Right ventricle myocardium superior (tissue), 1 donor: ENCODE measurements at regions of chr1 and their contacts with region 1.

Region 1: GRCh38 chr1:32876341-32877210 is 5.9 kb upstream of the FNDC5 start:
- DNase-seq: peak; percentile 78
- ATAC-seq: peak; percentile 59

Region 2: GRCh38 chr1:32496127-32496526 is 380.4 kb before region 1 on chr1:
- intact Hi-C with region 1: loop called (anchors 10 kb)
- DNase-seq: no peak
- ATAC-seq: peak; percentile 23

Region 3: DNA sequence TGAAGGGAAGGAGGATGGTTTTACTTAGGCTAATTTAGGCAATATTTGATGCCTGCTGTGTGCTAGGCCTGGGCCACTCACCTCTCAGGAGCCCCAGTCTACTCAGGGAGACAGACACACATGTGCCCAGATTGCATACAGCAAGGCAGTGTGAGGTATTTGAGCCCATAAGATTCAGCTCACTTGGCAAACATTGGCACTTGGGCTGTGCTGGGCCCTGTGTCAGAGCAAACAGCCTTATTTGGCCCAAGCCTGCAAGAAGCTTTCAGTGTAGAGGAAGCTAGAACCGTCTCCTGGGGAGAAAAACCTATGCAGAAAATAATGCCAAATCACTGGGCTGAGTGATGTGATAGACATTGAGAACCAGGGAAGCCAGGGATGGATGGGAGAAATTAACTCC is 170.1 kb before region 1 on chr1:
- intact Hi-C with region 1: no loop called
- DNase-seq: peak; percentile 13
- ATAC-seq: no peak

Region 4: DNA sequence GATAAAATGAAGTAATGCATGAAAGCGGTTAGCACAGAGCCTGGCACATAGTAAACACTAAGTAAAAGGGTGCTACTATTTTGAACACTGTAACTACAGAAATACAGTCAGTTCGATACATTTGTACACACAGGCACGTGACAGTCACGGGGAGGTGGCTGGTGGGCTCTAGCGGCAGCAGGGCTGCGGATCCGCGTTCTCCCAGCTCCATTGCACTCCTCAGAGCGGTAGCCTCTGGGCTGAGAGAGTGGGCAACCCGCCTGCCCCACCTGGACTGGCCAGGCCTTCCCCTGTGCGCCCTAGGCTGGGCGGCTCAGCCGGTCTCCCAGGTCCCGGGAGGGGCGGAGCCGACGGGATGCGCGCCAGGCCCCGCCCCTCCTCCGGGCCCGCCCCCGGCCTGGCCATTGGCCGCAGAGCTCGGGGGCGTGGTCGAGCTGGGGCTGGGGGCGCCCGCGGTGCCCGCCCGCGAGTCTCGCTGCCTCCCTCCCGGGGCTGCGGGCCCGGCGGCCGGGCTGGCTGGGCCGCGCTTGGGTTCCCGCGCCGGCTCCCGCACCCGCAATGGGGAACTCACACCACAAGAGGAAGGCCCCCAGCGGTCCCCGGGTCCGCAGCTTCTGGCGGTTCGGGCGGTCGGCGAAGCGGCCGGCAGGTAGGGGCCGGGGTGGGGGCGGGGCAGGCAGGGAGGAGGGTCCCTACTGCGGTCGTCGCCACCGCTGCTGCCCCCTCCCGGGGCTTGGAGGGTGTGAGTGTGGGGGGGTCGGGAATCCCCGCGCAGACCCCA is 122.9 kb before region 1 on chr1:
- intact Hi-C with region 1: no loop called
- DNase-seq: peak; percentile 73
- ATAC-seq: peak; percentile 94

Region 5: DNA sequence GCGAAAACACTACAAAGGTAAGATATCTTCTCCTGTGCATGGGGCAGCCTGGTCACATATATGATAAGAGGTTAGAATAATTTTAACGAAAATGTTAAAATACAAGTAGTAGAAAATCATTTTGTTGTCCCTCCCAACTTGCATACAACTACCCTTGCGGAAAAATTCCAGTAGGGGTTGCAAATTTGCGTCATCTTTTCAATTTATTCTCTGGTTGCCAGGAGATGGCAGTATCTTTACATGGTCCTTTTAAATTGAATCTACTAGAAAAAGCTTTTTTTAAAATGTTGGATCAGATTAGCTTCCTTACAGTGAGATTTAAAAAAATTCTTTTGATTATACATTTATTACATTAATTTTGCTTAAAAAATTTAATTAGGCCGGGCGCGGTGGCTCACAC is 48.2 kb before region 1 on chr1:
- intact Hi-C with region 1: loop called (anchors 10 kb)
- DNase-seq: no peak
- ATAC-seq: no peak